SK-N-SH (cell line): ENCODE measurements at regions of chr17 and their contacts with region 1.

Region 1: GRCh38 chr17:7989781-7990655 is 12.4 kb upstream of the GUCY2D start:
- DNase-seq: peak; percentile 93
- H3K4me3 ChIP-seq: peak overlapping the region; percentile 57 to 72
- H3K27ac ChIP-seq: peak overlapping the region in 1 of 2 experiments; percentile 47; a peak in 1 of 4 replicates
- H3K4me1 ChIP-seq: peaks cover 0 to 4% of the 10 kb centered on the region in 2 experiments; a peak in 1 of 4 replicates
- H3K27me3 ChIP-seq: no peaks in the 10 kb centered on the region
- CTCF ChIP-seq: peak; percentile 93
- EP300 ChIP-seq: no peak; a peak in 1 of 4 replicates
- RAD21 ChIP-seq: peak; percentile 59

Region 2: GRCh38 chr17:7825206-7825990 is 164.6 kb before region 1 on chr17:
- CTCF ChIA-PET with region 1: interaction called, 15 read pairs
- POLR2A ChIA-PET with region 1: no interaction called
- DNase-seq: peak; percentile 69
- H3K4me3 ChIP-seq: no peak overlapping the region
- H3K27ac ChIP-seq: no peak overlapping the region
- H3K4me1 ChIP-seq: peaks cover 0 to 12% of the 10 kb centered on the region in 2 experiments; a peak in 1 of 4 replicates
- H3K27me3 ChIP-seq: peaks cover 2% of the 10 kb centered on the region
- CTCF ChIP-seq: peak; percentile 40
- EP300 ChIP-seq: no peak
- RAD21 ChIP-seq: peak; percentile 28; the same call in 1 of the 2 replicates

Region 3: GRCh38 chr17:7897773-7898172 is 92.2 kb before region 1 on chr17:
- CTCF ChIA-PET with region 1: interaction called, 15 read pairs
- POLR2A ChIA-PET with region 1: no interaction called
- DNase-seq: peak; percentile 72
- H3K4me3 ChIP-seq: no peak overlapping the region
- H3K27ac ChIP-seq: no peak overlapping the region; a peak in 1 of 4 replicates
- H3K4me1 ChIP-seq: no peaks in the 10 kb centered on the region
- H3K27me3 ChIP-seq: no peaks in the 10 kb centered on the region
- CTCF ChIP-seq: peak; percentile 70
- EP300 ChIP-seq: no peak
- RAD21 ChIP-seq: peak; percentile 92

Region 4: GRCh38 chr17:7915611-7916382 is 74.2 kb before region 1 on chr17 and contains the start of gene RNF227:
- CTCF ChIA-PET with region 1: interaction called, 90 read pairs
- POLR2A ChIA-PET with region 1: interaction called, 7 read pairs
- DNase-seq: peak; percentile 93
- H3K4me3 ChIP-seq: peak within 1 kb of the TSS; percentile 57 to 62
- H3K27ac ChIP-seq: peak within 1 kb of the TSS; percentile 60 to 90
- H3K4me1 ChIP-seq: peaks cover 14 to 18% of the 10 kb centered on the region in 2 experiments; a peak in 2 of 4 replicates
- H3K27me3 ChIP-seq: no peaks in the 10 kb centered on the region
- CTCF ChIP-seq: no peak
- EP300 ChIP-seq: no peak
- RAD21 ChIP-seq: peak; percentile 11; the same call in 1 of the 2 replicates
- polyA plus RNA-seq, gene RNF227: 7.4 and 9.0 TPM in 2 replicates

Region 5: GRCh38 chr17:8005960-8006730 is 16.1 kb after region 1 on chr17:
- CTCF ChIA-PET with region 1: interaction called, 32 read pairs
- POLR2A ChIA-PET with region 1: no interaction called
- DNase-seq: peak; percentile 57
- H3K4me3 ChIP-seq: no peak overlapping the region
- H3K27ac ChIP-seq: no peak overlapping the region
- H3K4me1 ChIP-seq: no peaks in the 10 kb centered on the region
- H3K27me3 ChIP-seq: 0 out of 2 replicates have a peak, but pooled peaks cover 4% of the 10 kb centered on the region
- CTCF ChIP-seq: no peak
- EP300 ChIP-seq: no peak
- RAD21 ChIP-seq: no peak

Region 6: DNA sequence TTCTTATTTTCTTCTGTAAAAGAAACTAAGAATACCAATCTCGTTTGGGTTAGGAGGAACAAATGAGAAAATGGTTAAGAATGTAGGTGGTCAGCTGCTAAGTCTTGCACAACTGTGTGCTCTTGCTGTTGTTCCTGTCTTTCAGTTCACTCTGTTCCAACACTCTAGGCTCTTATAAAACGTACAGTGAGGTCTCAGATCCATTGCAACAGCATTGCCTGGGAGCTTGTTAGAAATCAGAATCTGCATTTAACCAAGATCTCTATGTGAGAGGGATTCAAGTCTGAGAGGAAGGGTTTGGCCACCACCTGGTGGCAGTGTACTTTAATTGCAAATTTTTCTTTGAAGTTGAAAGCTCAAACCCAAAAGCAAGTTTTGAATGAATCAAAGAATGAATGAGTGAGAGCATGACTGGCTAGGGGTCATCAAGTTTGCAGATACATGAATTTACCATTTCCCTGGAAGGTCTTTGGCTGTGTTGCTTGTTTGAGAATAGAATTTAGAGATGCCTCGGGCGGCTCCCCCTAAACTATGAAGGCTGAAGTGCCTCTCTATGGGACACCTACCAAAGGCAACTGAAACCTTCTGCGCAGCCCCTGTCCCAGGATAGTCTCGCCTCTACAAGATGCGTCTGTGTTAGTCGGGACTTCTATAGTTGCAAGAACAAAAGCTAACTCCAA is 51.4 kb after region 1 on chr17:
- CTCF ChIA-PET with region 1: interaction called, 64 read pairs
- POLR2A ChIA-PET with region 1: no interaction called
- DNase-seq: peak; percentile 73
- H3K4me3 ChIP-seq: no peak overlapping the region
- H3K27ac ChIP-seq: peak overlapping the region in 1 of 2 experiments; percentile 53; a peak in 2 of 4 replicates
- H3K4me1 ChIP-seq: peaks cover 5 to 8% of the 10 kb centered on the region in 2 experiments; a peak in 2 of 4 replicates
- H3K27me3 ChIP-seq: peaks cover 6% of the 10 kb centered on the region
- CTCF ChIP-seq: peak; percentile 76
- EP300 ChIP-seq: no peak
- RAD21 ChIP-seq: peak; percentile 86